ENCODE measurements at regions of chr9 and their contacts with region 1.

Region 1: DNA sequence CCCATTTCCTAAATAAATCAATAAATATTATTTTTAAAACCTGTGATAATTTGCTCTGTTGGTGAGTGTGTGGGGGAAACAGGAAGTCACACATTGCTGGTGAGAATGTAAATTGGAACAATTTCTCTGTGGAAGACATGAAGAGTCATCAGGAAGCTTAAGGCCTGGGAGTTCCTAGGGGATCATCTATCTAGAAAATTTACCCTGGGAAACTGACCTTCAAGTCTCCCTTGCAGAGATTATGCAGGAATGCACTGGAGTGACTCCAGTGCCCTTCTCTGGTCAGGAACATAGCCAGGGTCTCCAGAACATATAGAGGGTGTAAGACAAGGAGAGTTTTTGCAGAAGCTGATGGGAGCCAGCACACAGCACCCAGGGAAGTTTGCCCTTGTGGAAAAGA is 13.0 kb upstream of the GCNT1 start:
- DNase-seq: no peak
- H3K4me3 ChIP-seq: no peak overlapping the region
- H3K4me3 Mint-ChIP-seq: no peak overlapping the region
- H3K27ac Mint-ChIP-seq: no peak overlapping the region
- H3K4me1 ChIP-seq: no peaks in the 10 kb centered on the region
- H3K4me1 Mint-ChIP-seq: peaks cover 8% of the 10 kb centered on the region
- H3K27me3 ChIP-seq: no peaks in the 10 kb centered on the region
- H3K27me3 Mint-ChIP-seq: no peaks in the 10 kb centered on the region
- CTCF ChIP-seq: no peak

Region 2: DNA sequence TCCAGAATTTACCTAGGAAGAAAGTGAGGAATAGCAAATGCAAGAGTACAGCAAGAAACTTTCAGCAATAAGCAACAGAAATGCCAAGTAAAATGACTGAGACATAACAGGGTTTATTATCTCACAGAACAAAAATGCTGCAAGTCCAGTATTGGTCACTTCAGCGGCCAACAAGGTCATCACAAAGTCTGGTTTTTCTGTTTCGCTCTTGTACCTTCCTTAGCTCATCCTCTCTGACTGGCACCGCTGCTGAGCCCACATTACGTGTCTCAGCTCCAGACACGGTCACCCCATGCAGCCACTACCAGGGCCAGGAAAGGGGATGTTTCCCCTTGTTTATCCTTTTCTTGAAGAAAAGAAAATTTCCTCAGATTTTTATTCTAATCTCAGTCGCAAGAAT is 134.4 kb before region 1 on chr9:
- CTCF ChIA-PET with region 1: no interaction called
- POLR2A ChIA-PET with region 1: no interaction called
- intact Hi-C with region 1: no loop called
- DNase-seq: no peak
- H3K4me3 ChIP-seq: no peak overlapping the region
- H3K4me3 Mint-ChIP-seq: no peak overlapping the region
- H3K27ac Mint-ChIP-seq: peak overlapping the region; percentile 70
- H3K4me1 ChIP-seq: no peaks in the 10 kb centered on the region
- H3K4me1 Mint-ChIP-seq: no peaks in the 10 kb centered on the region
- H3K27me3 ChIP-seq: no peaks in the 10 kb centered on the region
- H3K27me3 Mint-ChIP-seq: no peaks in the 10 kb centered on the region
- CTCF ChIP-seq: no peak

Region 3: GRCh38 chr9:76658535-76659231 is 212.7 kb after region 1 on chr9:
- CTCF ChIA-PET with region 1: no interaction called
- POLR2A ChIA-PET with region 1: no interaction called
- intact Hi-C with region 1: loop called (anchors 2 kb)
- DNase-seq: peak in 1 of 2 experiments; percentile 17
- H3K4me3 ChIP-seq: no peak overlapping the region
- H3K4me3 Mint-ChIP-seq: no peak overlapping the region
- H3K27ac Mint-ChIP-seq: no peak overlapping the region
- H3K4me1 ChIP-seq: no peaks in the 10 kb centered on the region
- H3K4me1 Mint-ChIP-seq: no peaks in the 10 kb centered on the region
- H3K27me3 ChIP-seq: no peaks in the 10 kb centered on the region
- H3K27me3 Mint-ChIP-seq: no peaks in the 10 kb centered on the region
- CTCF ChIP-seq: peak in 1 of 2 experiments; percentile 19

Region 4: GRCh38 chr9:76704593-76705204 is 258.7 kb after region 1 on chr9:
- CTCF ChIA-PET with region 1: no interaction called
- POLR2A ChIA-PET with region 1: no interaction called
- intact Hi-C with region 1: loop called (anchors 2 kb)
- DNase-seq: peak in 1 of 2 experiments; percentile 24
- H3K4me3 ChIP-seq: no peak overlapping the region
- H3K4me3 Mint-ChIP-seq: no peak overlapping the region
- H3K27ac Mint-ChIP-seq: no peak overlapping the region
- H3K4me1 ChIP-seq: no peaks in the 10 kb centered on the region
- H3K4me1 Mint-ChIP-seq: no peaks in the 10 kb centered on the region
- H3K27me3 ChIP-seq: no peaks in the 10 kb centered on the region
- H3K27me3 Mint-ChIP-seq: no peaks in the 10 kb centered on the region
- CTCF ChIP-seq: peak in 1 of 2 experiments; percentile 6